Activated CD8-positive, alpha-beta T cell treated with anti-CD3 and anti-CD28 coated beads for 36 hours (primary cell): ENCODE measurements at regions of chr5 and their contacts with region 1.

Region 1: DNA sequence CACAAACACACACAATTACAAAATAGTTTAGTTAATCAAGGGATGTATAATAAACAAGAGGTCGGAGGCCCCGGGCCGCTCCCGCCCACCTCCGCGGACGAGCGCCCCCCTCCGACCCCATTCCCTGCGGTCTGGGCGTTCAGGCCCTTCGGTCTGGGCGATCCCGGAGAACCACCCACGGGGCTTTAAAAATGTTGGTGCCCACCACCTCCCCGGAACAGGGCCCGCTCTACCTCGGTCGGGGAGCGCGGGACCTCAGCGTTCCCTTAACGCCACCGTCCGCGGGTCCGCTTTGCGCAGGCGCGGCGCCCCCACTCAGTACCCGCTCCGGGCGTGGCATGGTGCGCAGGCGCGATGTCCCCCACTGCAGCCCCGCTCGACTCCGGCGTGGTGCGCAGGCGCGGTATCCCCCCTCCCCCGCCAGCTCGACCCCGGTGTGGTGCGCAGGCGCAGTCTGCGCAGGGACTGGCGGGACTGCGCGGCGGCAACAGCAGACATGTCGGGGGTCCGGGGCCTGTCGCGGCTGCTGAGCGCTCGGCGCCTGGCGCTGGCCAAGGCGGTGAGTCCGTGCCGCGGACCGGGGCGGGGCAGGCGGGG is at the starts of genes CCDC127 and SDHA:
- DNase-seq: peak; percentile 97
- ATAC-seq: peak; percentile 88
- H3K4me3 Mint-ChIP-seq: peak within 1 kb of the TSS; percentile 92
- H3K27ac Mint-ChIP-seq: peak within 1 kb of the TSS; percentile 94
- H3K4me1 Mint-ChIP-seq: peaks cover 55% of the 10 kb centered on the region
- H3K27me3 Mint-ChIP-seq: no peaks in the 10 kb centered on the region
- CTCF ChIP-seq: no peak
- total RNA-seq, gene CCDC127: 4.2 to 4.3 TPM
- total RNA-seq, gene SDHA: 141 to 149 TPM

Region 2: DNA sequence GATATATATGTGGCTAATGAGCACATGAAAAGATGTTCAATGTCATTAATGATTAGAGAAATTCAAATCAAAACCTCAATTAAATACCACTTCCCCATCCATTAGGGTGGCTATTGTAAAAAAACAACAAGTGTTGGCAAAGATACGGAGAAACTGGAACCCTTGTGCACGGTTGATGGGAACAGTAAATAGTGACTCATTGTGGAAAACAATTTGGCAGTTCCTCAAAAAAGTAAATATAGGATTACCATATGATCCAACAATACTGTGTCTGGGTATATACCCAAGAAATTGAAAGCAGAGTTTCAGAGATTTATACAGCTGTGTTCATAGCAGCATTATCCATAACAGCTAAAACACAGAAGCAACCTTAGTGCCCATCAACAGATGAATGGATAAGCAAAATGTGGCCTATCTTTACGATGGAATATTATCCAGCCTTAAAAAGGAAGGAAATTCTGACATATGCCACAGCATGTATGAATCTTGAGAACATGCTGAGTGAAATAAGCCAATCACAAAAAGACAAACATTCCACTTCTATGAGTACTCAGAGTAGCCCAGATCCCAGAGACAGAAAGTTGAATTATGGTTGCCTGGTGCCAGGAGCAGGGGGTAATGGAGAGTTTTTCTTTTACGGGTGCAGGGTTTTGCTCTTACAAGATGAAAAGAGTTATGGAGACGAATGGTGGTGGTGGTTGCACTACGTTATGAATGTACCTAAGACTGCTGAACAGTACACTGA is 68.0 kb before region 1 on chr5:
- CTCF ChIA-PET with region 1: no interaction called
- POLR2A ChIA-PET with region 1: no interaction called
- intact Hi-C with region 1: no loop called
- DNase-seq: no peak
- ATAC-seq: no peak
- H3K4me3 Mint-ChIP-seq: no peak overlapping the region
- H3K27ac Mint-ChIP-seq: no peak overlapping the region
- H3K4me1 Mint-ChIP-seq: no peaks in the 10 kb centered on the region
- H3K27me3 Mint-ChIP-seq: no peaks in the 10 kb centered on the region
- CTCF ChIP-seq: no peak

Region 3: DNA sequence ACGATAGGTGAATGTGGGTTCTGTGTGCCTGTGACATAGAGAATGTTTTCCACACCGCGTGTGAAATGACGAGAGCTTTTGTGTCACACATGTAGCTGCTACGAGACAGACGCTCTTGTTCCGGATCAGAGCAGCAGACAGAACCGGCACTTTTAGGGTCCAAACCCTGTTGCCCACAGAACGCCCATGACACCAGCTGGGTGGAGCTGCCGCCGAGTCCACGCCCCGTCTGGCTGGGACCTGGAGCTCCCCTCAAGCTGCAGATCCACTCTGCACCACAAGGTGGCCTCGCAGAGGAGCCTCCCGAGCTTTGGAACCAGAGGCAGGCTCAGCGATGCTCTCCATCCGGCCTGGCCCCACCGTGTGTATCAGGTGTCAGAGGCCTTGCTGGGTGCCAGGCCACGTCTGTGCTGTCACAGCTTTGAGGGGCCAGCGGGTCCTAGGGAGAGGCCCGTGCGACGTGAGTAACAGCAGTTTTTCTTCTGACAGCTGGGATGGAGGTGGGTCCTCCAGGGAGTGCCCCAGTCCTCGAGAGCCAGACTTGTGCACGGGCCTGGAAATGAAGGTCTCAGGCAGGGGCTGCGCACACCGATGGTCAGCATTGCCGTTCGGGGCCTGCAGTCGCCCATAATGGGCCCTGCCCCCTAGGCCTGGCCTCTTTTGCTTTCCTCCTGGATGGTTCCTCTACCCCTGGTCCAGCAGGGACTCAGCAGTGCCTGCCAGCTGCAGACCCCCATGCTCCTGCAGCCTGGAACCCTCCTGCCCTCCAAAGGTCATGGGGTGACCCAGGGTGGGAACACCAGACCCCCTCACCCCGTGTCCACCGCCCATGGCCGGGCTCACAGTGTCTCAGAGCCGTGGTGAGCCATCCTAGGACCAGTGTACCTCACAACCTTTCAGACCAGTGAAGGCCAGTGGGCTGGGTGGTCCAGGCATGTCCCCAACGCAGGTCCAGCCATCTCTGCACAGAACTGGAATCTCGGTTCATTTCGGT is 29.2 kb before region 1 on chr5:
- CTCF ChIA-PET with region 1: interaction called, 23 read pairs
- POLR2A ChIA-PET with region 1: interaction called, 6 read pairs
- intact Hi-C with region 1: no loop called
- DNase-seq: peak; percentile 95
- ATAC-seq: peak; percentile 99
- H3K4me3 Mint-ChIP-seq: no peak overlapping the region
- H3K27ac Mint-ChIP-seq: peak overlapping the region; percentile 5
- H3K4me1 Mint-ChIP-seq: peaks cover 13% of the 10 kb centered on the region
- H3K27me3 Mint-ChIP-seq: no peaks in the 10 kb centered on the region
- CTCF ChIP-seq: peak; percentile 94

Region 4: DNA sequence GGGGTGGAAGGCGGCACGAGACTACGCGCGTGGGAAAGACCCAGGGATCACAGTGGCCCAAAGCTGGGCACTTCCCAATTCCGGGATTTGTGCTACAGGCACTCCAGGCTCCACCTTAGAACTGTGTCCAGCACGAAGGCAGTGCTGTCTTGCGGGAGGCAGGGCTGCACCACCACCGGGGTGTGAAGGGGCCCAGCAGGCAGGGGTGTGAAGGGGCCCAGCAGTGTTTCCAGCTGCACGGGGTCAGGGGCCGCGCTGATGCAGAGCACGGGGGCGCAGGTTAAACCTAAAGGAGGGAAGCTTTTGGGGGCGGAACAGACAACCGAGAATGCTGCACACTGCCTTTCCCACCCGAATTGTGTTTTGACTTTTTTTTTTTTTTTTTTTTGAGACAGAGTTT is 52.4 kb after region 1 on chr5:
- CTCF ChIA-PET with region 1: interaction called, 4 read pairs
- POLR2A ChIA-PET with region 1: interaction called, 11 read pairs
- intact Hi-C with region 1: no loop called
- DNase-seq: no peak
- ATAC-seq: no peak
- H3K4me3 Mint-ChIP-seq: peak overlapping the region; percentile 93
- H3K27ac Mint-ChIP-seq: peak overlapping the region; percentile 88
- H3K4me1 Mint-ChIP-seq: peaks cover 54% of the 10 kb centered on the region
- H3K27me3 Mint-ChIP-seq: no peaks in the 10 kb centered on the region
- CTCF ChIP-seq: no peak